ENCODE measurements at regions of chr6 and their contacts with region 1.

Region 1: GRCh38 chr6:26342106-26343004 is 22.6 kb upstream of the BTN3A2 start:
- DNase-seq: no peak
- ATAC-seq: no peak
- H3K4me3 ChIP-seq: no peak overlapping the region
- H3K27ac ChIP-seq: no peak overlapping the region
- H3K4me1 ChIP-seq: no peaks in the 10 kb centered on the region
- H3K27me3 ChIP-seq: peaks cover 0 to 7% of the 10 kb centered on the region in 2 donors
- CTCF ChIP-seq: no peak
- POLR2A ChIP-seq: no peak

Region 2: DNA sequence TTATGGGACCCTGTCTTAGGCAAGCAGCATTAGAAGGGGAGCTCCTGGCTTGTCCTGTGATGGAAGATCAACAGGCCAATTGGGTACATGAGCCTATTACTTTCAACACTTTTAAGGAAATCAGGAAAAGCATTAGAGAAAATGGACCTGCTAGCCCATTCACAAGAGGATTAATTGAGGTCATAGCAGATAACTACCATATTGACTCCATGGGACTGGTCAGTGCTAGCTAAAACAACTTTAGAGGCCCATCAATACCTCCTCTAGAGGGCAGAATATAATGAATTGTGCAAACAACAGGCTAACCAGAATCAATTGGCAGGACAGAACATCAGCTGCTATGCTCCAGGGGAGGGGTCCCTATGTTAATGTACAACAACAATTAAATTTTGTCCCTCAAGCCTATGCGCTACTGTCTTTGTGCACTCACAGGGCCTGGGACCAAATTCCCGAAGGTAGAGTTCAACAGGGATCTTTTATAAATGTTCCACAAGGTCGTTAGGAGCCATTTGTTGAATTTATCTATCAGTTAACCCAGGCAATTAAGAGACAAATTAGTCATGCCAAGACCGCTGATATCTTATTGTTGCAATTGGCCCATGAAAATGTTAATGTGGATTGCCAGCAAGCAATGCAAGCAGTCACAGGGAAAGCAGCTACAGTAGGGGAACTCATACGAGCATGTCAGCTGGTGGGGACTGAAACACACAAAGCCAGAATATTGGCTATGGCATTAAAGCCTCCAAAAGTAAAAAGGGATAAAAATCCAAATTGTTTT is 84.0 kb before region 1 on chr6:
- intact Hi-C with region 1: no loop called
- DNase-seq: no peak
- ATAC-seq: no peak
- H3K4me3 ChIP-seq: no peak overlapping the region
- H3K27ac ChIP-seq: no peak overlapping the region
- H3K4me1 ChIP-seq: no peaks in the 10 kb centered on the region
- H3K27me3 ChIP-seq: no peaks in the 10 kb centered on the region
- CTCF ChIP-seq: peak in 1 of 4 donors; percentile 4
- POLR2A ChIP-seq: no peak

Region 3: DNA sequence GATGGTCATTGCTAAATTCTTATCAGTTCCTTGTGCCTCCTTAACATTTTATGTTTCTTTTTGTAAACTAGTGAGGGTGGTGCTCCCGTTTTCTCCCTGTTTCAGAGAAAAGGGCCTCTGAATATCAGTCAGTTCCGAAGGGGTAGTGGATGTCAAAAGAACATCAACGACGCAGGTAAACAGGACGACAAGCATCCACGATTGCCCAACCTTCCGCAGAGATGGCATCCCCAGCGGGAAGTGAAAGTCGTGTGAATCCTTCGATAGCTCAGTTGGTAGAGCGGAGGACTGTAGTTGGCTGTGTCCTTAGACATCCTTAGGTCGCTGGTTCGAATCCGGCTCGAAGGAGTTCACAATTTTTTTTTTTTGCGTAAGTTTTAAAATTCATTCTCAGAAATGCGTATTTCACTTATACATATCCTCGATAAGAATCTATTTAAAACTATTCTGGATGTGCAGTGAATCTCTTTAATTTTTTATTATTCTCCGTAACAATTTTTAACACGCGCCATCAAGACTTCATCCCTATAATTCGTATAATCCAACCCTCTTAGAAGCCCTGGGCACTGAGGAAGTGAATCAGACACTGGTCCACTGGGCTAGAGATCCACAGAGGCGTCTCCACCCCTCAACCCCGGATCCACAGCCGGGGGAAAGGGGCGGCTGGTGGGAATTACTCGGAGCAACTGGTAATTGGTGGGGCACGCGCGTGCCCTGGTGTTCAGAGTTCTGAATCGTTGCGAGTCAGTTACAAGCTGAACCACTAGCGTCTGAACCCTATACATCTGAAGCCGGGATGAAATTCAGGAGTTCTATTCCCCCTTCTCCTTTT is 226.5 kb after region 1 on chr6:
- intact Hi-C with region 1: loop called in 1 of 2 experiments (anchors 10 kb)
- DNase-seq: peak; percentile 88 to 90 (median 88)
- ATAC-seq: peak; percentile 74 to 86 (median 76)
- H3K4me3 ChIP-seq: peak overlapping the region; percentile 18 to 43 (median 22)
- H3K27ac ChIP-seq: no peak overlapping the region
- H3K4me1 ChIP-seq: no peaks in the 10 kb centered on the region
- H3K27me3 ChIP-seq: no peaks in the 10 kb centered on the region
- CTCF ChIP-seq: peak in 1 of 4 donors; percentile 15
- POLR2A ChIP-seq: no peak

Region 4: GRCh38 chr6:26594730-26595632 is 252.6 kb after region 1 on chr6:
- intact Hi-C with region 1: loop called in 1 of 2 experiments (anchors 5 kb)
- DNase-seq: no peak
- ATAC-seq: no peak
- H3K4me3 ChIP-seq: peak overlapping the region in 2 of 3 donors; percentile 96 to 97
- H3K27ac ChIP-seq: peak overlapping the region in 1 of 3 donors; percentile 73
- H3K4me1 ChIP-seq: peaks cover 0 to 9% (median 2%) of the 10 kb centered on the region in 4 donors
- H3K27me3 ChIP-seq: peaks cover 6 to 11% of the 10 kb centered on the region in 2 donors
- CTCF ChIP-seq: no peak
- POLR2A ChIP-seq: no peak

Measured in right lobe of liver (tissue), 6 donors.